WTC11 (cell line): ENCODE measurements at regions of chr12 and their contacts with region 1.

Region 1: GRCh38 chr12:47397664-47398281 is 308.1 kb downstream of the RPAP3 start:
- DNase-seq: no peak
- ATAC-seq: peak; percentile 92
- H3K4me3 Mint-ChIP-seq: no peak overlapping the region
- H3K27ac Mint-ChIP-seq: no peak overlapping the region
- H3K4me1 Mint-ChIP-seq: peaks cover 16% of the 10 kb centered on the region
- H3K27me3 Mint-ChIP-seq: no peaks in the 10 kb centered on the region
- CTCF ChIP-seq: no peak

Region 2: GRCh38 chr12:47408171-47408871 is 10.5 kb after region 1 on chr12:
- CTCF ChIA-PET with region 1: interaction called, 13 read pairs
- POLR2A ChIA-PET with region 1: no interaction called
- DNase-seq: peak; percentile 34
- ATAC-seq: peak; percentile 89
- H3K4me3 Mint-ChIP-seq: no peak overlapping the region
- H3K27ac Mint-ChIP-seq: no peak overlapping the region
- H3K4me1 Mint-ChIP-seq: no peaks in the 10 kb centered on the region
- H3K27me3 Mint-ChIP-seq: no peaks in the 10 kb centered on the region; the same call in 1 of the 2 replicates
- CTCF ChIP-seq: no peak